Activated T-helper 2 cell treated with anti-CD3 and anti-CD28 coated beads, Interferon-gamma antibody, Interleukin-2, Interleukin-4, amounts not matched to agents 10 μg/mL and 5 μg/mL and 100 μg/mL, durations not matched to agents 14 hours and 24 hours and 36 hours (primary cell): ENCODE measurements at regions of chrX and their contacts with region 1.

Region 1: DNA sequence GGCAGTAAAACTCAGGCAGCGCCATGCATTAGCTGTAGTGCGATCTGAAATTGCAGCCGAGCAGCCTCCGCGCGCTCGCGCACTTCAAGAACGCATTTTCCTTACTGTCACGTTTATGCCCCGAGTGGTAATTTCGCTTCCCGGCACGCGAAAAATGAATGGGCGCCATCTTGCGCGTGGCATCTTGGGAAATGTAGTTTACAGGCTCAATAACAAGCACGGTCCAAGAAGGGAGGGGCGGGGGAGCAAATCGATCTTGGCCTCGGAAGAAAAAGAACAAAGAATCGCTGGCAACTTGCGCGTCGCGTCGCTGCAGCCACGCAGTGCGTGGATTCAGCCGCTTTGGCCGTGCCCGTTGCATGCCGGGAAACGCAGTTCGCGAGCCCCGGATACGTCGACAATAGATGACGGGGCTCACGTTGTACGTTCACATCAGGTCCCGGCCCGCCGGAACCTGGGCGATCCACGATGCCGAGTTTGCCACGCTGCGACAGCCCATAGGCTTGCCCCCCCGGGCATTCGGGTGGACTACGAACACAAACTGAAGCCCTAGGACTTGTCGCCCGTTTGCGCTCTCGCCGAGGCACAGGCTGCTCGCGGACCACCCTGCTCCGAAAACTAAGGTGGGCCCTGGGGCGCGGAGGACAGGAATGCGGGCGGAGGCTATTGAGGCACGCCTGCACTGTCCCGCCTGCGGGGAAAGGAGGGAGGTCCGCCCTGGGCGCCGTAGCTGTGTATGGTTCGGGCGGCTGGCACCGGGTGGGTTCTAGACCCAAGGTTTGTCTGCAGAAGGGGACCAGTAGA is at the start of gene FTSJ1:
- DNase-seq: peak; percentile 88
- H3K4me3 Mint-ChIP-seq: peak within 1 kb of the TSS; percentile 98
- H3K27ac Mint-ChIP-seq: peak within 1 kb of the TSS; percentile 95
- H3K4me1 Mint-ChIP-seq: peaks cover 32% of the 10 kb centered on the region
- H3K27me3 Mint-ChIP-seq: no peaks in the 10 kb centered on the region
- total RNA-seq, gene FTSJ1: 84.6 and 89.8 TPM in 2 replicates

Region 2: DNA sequence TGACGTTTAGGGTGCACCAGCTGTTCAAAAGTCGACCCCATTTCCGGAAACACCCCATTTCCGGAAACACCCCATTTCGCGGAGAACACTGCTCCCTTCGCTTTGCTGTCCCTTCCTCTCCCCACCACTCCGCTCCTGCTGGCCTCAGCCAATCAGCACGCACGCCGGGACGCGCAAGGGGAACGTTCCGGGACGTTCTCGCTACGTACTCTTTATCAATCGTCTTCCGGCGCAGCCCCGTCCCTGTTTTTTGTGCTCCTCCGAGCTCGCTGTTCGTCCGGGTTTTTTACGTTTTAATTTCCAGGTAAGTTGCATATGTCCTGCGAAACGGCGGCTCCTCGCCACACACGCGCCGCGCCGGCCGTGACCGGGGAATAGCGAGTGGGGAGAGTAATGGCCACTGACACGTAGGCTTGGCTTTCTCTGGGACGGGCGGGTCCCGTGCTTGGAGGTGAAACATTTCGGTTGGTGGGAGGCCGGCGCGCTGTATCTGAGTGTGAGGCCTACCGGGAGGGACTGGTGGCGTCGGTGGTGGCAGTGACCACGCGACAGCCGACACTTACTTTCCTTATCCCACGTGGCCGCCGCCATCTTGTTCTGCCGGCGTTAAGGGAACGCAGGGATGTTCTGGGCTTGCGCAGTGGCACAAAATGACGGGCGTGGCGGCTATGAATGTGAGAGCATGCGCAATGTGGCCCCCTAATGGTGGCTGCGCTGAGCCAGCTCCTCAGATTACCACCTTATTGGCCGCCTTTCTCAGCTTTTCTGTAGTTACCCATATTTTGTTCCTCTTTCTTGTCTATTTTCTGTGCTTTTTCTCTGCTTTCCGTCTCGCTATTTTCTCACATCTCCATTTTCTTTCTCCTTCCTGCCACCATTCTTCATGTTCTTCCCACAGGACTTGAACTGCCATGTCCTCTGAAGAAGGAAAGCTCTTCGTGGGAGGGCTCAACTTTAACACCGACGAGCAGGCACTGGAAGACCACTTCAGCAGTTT is 98.6 kb after region 1 on chrX and contains the start of gene RBM3:
- intact Hi-C with region 1: loop called (anchors 5 kb)
- DNase-seq: peak; percentile 89
- H3K4me3 Mint-ChIP-seq: peak within 1 kb of the TSS; percentile 99
- H3K27ac Mint-ChIP-seq: peak within 1 kb of the TSS; percentile 100
- H3K4me1 Mint-ChIP-seq: peaks cover 17% of the 10 kb centered on the region
- H3K27me3 Mint-ChIP-seq: no peaks in the 10 kb centered on the region
- total RNA-seq, gene RBM3: 345 and 346 TPM in 2 replicates